ENCODE measurements at regions of chr1 and their contacts with region 1.

Region 1: DNA sequence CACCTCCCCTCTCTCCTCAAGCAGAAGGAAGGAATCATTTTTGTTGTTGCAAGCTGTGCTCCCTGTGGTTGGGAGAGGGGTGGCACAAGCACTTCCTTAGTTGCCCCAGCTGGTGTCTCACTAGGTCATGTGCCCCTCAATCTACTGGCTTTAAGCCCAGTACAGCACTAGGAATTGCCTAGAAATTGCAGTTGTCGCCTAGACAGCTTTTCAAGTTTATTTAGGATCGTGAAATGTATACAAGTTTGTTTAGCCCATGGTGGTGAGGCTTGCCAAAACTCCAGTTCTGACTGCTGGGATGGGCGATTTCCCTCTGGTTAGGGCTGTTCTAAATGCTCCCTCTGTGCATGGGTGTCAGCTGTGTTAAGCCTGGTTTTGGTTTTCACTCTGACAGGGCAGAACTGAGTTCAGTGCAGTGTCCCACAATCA is 126.8 kb upstream of the ZNF644 start:
- DNase-seq: no peak
- ATAC-seq: no peak
- H3K4me3 ChIP-seq: no peak overlapping the region
- H3K27ac ChIP-seq: no peak overlapping the region
- H3K4me1 ChIP-seq: no peaks in the 10 kb centered on the region
- H3K27me3 ChIP-seq: no peaks in the 10 kb centered on the region
- CTCF ChIP-seq: no peak

Region 2: DNA sequence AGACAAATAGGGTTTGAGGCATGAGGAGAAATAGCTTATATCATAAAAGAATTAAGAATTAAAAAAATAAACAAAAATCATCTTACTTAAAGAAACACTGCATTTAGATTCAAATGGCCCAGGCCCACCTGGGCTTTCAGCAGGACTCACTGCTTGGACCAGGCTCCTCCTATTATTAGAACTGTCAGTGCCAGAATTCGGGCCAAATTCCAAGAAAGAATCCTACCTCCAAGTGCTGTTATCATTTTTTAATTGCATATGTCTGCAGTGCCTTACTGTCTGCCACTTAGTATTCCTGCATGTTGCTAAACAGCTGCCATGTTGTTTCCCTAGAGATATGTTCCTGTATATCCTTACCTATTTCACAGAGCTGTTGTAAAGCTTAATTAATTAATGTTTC is 543.6 kb before region 1 on chr1:
- CTCF ChIA-PET with region 1: no interaction called
- POLR2A ChIA-PET with region 1: no interaction called
- in situ Hi-C with region 1: no loop called
- intact Hi-C with region 1: no loop called
- DNase-seq: no peak
- ATAC-seq: no peak
- H3K4me3 ChIP-seq: no peak overlapping the region
- H3K27ac ChIP-seq: no peak overlapping the region
- H3K4me1 ChIP-seq: no peaks in the 10 kb centered on the region
- H3K27me3 ChIP-seq: peaks cover 2% of the 10 kb centered on the region; the same call in 1 of the 2 replicates
- CTCF ChIP-seq: no peak

Region 3: GRCh38 chr1:90650401-90650800 is 498.3 kb before region 1 on chr1:
- CTCF ChIA-PET with region 1: no interaction called
- POLR2A ChIA-PET with region 1: interaction called, 10 read pairs
- in situ Hi-C with region 1: no loop called
- intact Hi-C with region 1: no loop called
- DNase-seq: no peak
- ATAC-seq: no peak
- H3K4me3 ChIP-seq: no peak overlapping the region
- H3K27ac ChIP-seq: no peak overlapping the region
- H3K4me1 ChIP-seq: no peaks in the 10 kb centered on the region
- H3K27me3 ChIP-seq: no peaks in the 10 kb centered on the region; the same call in 1 of the 2 replicates
- CTCF ChIP-seq: no peak

Region 4: DNA sequence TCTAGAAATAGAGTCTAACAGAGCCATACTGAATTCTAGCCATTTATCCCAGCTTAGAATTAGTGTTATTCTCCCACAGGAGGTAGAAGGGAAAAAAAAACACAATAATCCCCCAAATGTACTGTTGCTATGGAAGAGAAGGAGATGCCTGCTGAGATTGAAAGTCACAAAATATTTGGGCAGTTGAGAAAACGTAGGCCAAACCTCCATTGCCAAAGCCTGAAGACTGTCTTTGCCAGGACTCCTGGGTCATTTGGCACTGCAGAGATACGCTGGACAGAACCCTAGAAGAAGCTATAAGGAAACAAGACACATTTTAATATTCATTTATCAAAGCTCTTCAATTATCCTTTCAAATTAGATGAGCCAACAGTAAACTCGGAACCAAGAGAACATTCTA is 453.8 kb before region 1 on chr1:
- CTCF ChIA-PET with region 1: no interaction called
- POLR2A ChIA-PET with region 1: interaction called, 10 read pairs
- in situ Hi-C with region 1: no loop called
- intact Hi-C with region 1: no loop called
- DNase-seq: no peak
- ATAC-seq: no peak
- H3K4me3 ChIP-seq: no peak overlapping the region
- H3K27ac ChIP-seq: no peak overlapping the region
- H3K4me1 ChIP-seq: no peaks in the 10 kb centered on the region
- H3K27me3 ChIP-seq: peaks cover 37% of the 10 kb centered on the region
- CTCF ChIP-seq: no peak

Region 5: DNA sequence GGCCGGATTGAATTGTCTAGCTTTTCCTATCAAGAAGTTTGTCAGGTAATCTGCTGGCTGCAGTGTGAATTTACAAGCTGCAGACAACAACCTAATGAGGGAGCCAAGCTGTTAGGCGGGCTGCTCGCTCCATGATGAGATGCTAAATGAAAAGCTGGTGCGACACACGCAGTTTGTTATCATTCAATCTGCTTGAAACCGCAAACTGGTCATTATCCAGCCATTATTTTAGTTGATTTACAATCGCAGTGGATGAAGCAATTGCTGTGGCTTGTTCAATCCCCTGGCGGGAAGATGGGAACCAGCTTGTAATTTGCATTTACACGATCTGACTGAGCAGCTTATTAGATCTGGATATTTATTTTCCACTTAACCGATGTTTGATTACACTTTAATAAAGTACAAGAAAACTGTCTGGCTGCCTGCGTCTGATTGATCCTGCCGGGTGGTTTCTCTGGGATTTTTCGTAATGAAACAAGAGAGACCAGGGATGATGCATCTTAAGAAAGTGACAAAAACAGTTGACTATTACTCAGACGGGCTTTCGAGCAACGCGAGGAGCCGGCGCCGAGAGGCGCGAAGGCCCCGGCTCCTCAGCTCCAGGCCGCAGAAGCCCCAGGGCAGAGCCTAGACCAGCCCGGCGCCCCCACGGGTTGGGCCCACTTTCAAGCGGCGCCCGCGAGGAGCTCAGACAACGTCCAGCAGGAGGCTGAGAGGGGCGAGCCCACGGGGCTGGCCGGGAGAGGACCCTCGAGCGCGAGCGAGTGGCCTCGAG is 313.6 kb before region 1 on chr1:
- CTCF ChIA-PET with region 1: no interaction called
- POLR2A ChIA-PET with region 1: no interaction called
- in situ Hi-C with region 1: no loop called
- intact Hi-C with region 1: no loop called
- DNase-seq: no peak
- ATAC-seq: no peak
- H3K4me3 ChIP-seq: no peak overlapping the region
- H3K27ac ChIP-seq: no peak overlapping the region
- H3K4me1 ChIP-seq: no peaks in the 10 kb centered on the region
- H3K27me3 ChIP-seq: no peaks in the 10 kb centered on the region
- CTCF ChIP-seq: no peak

Measured in Panc1 (cell line).